HEK293T (cell line): ENCODE measurements at regions of chr14 and their contacts with region 1.

Region 1: GRCh38 chr14:57871459-57872080 is 5.7 kb upstream of the SLC35F4 start:
- DNase-seq: peak; percentile 46

Region 2: GRCh38 chr14:57692671-57693070 is 178.9 kb before region 1 on chr14:
- CTCF ChIA-PET with region 1: interaction called, 11 read pairs
- POLR2A ChIA-PET with region 1: no interaction called
- DNase-seq: peak; percentile 26